Activated CD8-positive, alpha-beta T cell treated with anti-CD3 and anti-CD28 coated beads, Interleukin-2, amount 10 ng/mL, durations not matched to agents 7 days and 5 days (primary cell): ENCODE measurements at regions of chr16 and their contacts with region 1.

Region 1: DNA sequence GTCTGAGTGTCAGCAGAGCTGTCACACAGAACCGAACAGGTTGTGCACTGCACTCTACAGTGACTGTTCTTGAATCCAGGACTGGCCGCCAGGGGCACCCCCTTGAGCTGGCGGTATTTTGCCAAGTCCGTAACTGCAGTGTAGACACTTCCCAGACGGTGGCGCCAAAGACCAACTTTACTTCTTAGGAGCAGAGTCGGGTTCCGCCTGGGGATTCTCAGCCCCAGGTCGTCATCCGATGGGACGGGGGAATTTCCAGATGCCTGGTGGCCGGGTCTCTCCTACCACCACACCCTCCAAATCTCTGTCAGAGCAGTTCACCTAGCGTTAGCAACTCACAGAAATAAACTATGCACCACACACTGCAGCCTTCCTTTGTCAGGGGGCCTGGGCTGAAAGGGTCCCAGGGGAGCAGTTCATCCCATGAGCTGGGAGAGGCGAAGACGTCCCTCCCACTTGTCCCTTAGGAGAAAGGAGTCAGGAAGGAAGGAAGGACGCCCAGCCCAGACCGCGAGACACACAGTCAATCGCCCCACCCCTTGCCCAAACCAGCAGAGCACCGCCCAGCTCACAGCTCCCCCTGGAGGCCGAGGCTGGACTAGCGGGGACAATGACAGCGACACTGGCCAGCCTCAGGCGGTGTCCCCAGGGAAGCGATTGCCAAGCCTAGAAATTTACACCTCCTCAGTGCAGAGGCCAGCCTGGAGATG is 7.4 kb upstream of the RIPOR1 start:
- DNase-seq: peak; percentile 98
- ATAC-seq: peak; percentile 92
- H3K4me3 Mint-ChIP-seq: peak overlapping the region; percentile 84
- H3K27ac Mint-ChIP-seq: peak overlapping the region; percentile 94
- H3K4me1 Mint-ChIP-seq: peaks cover 47% of the 10 kb centered on the region
- H3K27me3 Mint-ChIP-seq: peaks cover 8% of the 10 kb centered on the region

Region 2: GRCh38 chr16:67159593-67160406 is 361.4 kb before region 1 on chr16 and contains the starts of genes FBXL8 and TRADD:
- CTCF ChIA-PET with region 1: no interaction called
- POLR2A ChIA-PET with region 1: no interaction called
- DNase-seq: peak; percentile 86
- ATAC-seq: peak; percentile 73
- H3K4me3 Mint-ChIP-seq: peak within 1 kb of the TSS; percentile 96
- H3K27ac Mint-ChIP-seq: peak within 1 kb of the TSS; percentile 94
- H3K4me1 Mint-ChIP-seq: peaks cover 73% of the 10 kb centered on the region
- H3K27me3 Mint-ChIP-seq: peaks cover 15% of the 10 kb centered on the region
- total RNA-seq, gene FBXL8: 22.7 to 24.8 TPM
- total RNA-seq, gene TRADD: 39.2 to 40.7 TPM

Region 3: DNA sequence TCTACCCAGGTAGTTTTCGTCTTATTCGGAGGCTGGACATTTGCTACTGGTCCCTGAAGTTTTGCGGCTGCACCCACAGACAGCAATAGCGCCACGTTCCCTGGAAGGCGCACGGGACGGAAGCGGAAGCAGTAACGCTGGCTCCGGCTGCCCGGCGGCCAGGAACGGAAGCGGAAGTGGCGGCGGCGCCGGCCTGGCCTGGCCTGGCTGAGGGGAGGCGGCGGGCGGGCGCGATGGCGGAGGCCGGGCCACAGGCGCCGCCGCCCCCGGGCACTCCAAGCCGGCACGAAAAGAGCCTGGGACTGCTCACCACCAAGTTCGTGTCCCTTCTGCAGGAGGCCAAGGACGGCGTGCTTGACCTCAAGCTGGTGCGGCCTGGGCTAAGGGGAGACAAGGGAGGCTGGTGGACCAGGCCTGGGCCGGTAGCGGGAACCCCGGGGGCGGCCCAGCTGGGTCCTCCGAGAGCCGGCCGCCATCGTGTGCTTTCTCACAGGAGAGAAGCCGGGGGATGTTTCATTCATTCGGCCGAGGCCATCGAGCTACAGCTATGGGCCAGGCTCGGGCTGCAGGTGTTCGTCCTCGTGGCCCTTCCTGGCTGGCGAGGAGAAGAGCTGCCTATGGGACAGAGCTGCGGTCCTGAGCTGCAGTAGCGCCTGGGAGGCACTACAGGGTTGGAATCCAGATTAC is 329.1 kb before region 1 on chr16 and contains the start of gene E2F4:
- CTCF ChIA-PET with region 1: no interaction called
- POLR2A ChIA-PET with region 1: no interaction called
- DNase-seq: peak; percentile 90
- ATAC-seq: peak; percentile 95
- H3K4me3 Mint-ChIP-seq: peak within 1 kb of the TSS; percentile 91
- H3K27ac Mint-ChIP-seq: peak within 1 kb of the TSS; percentile 86
- H3K4me1 Mint-ChIP-seq: peaks cover 37% of the 10 kb centered on the region
- H3K27me3 Mint-ChIP-seq: no peaks in the 10 kb centered on the region
- total RNA-seq, gene E2F4: 134 to 138 TPM

Region 4: GRCh38 chr16:67428146-67428731 is 93.0 kb before region 1 on chr16:
- CTCF ChIA-PET with region 1: interaction called, 25 read pairs
- POLR2A ChIA-PET with region 1: no interaction called
- DNase-seq: peak; percentile 71
- ATAC-seq: peak; percentile 67
- H3K4me3 Mint-ChIP-seq: no peak overlapping the region
- H3K27ac Mint-ChIP-seq: no peak overlapping the region
- H3K4me1 Mint-ChIP-seq: peaks cover 7% of the 10 kb centered on the region
- H3K27me3 Mint-ChIP-seq: peaks cover 45% of the 10 kb centered on the region

Region 5: DNA sequence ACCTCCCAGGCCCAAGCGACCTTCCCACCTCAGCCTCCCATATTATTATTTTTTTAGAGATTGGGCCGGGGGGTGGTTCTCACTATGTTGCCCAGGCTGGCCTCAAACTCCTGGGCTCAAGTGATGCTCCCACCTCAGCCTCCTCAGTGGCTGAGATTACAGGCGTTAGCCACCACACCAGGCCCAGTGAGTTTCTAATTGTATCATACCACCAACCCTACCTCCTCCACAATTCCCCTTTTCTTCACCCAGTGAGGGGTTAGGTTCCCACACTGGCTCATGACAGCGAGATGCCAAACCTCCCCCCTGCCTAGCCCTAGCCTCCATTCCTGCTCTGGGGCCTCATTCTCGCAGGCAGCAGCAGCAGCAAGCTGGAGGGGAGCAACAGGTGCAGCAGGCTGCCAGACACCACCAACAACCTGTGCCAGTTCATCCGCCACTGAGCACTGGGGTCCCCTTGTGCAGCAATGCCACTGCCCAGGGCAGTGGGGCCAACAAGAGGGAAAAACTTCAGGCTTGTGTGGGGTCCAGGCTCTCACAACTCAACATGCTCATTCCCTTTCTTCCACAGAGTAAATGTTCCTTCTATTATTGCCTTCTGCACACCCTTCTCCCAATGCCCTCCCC is 49.4 kb before region 1 on chr16:
- CTCF ChIA-PET with region 1: no interaction called
- POLR2A ChIA-PET with region 1: no interaction called
- DNase-seq: no peak
- ATAC-seq: no peak
- H3K4me3 Mint-ChIP-seq: no peak overlapping the region
- H3K27ac Mint-ChIP-seq: no peak overlapping the region
- H3K4me1 Mint-ChIP-seq: peaks cover 2% of the 10 kb centered on the region
- H3K27me3 Mint-ChIP-seq: no peaks in the 10 kb centered on the region

Region 6: GRCh38 chr16:67499106-67499505 is 22.1 kb before region 1 on chr16:
- CTCF ChIA-PET with region 1: interaction called, 277 read pairs
- POLR2A ChIA-PET with region 1: interaction called, 3 read pairs
- DNase-seq: no peak
- ATAC-seq: no peak
- H3K4me3 Mint-ChIP-seq: no peak overlapping the region
- H3K27ac Mint-ChIP-seq: peak overlapping the region; percentile 34
- H3K4me1 Mint-ChIP-seq: peaks cover 13% of the 10 kb centered on the region
- H3K27me3 Mint-ChIP-seq: no peaks in the 10 kb centered on the region

Region 7: DNA sequence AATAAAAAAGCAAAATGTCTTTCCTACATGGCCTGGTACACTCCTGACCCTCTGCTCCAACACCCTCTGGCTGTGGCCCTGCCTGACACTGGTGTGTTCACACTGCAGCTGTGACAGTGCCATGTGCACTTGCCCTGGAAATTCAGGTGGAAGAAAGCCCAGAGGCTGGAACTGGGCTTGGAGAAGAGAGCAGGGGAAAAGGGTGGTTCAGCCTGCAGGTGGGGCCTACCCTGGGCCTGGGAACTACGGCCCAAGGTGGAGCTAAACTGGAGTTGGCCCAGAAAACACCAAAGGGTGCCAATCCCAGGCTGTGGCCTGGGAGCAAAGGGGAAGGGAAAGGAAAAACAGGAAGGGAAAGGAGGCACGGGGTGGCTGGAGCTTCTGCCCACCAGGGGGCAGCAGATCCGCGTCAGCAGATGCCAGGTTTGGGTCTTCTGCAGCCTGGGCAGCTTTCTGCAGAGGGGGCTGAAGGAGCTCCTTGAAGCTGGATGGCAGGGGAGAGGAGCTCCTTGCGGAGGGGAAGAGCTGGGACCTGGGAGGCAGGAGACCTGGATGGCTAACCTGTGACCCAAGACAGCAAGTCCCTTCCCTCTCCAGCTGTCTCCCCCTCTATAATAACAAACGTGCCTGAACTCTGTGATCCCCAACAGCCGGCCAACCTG is 25.6 kb after region 1 on chr16:
- CTCF ChIA-PET with region 1: interaction called, 59 read pairs
- POLR2A ChIA-PET with region 1: no interaction called
- DNase-seq: peak; percentile 83
- ATAC-seq: peak; percentile 52
- H3K4me3 Mint-ChIP-seq: peak overlapping the region; percentile 64
- H3K27ac Mint-ChIP-seq: peak overlapping the region; percentile 99
- H3K4me1 Mint-ChIP-seq: peaks cover 55% of the 10 kb centered on the region
- H3K27me3 Mint-ChIP-seq: no peaks in the 10 kb centered on the region

Region 8: GRCh38 chr16:67632415-67633172 is 111.3 kb after region 1 on chr16:
- CTCF ChIA-PET with region 1: interaction called, 15 read pairs
- POLR2A ChIA-PET with region 1: interaction called, 3 read pairs
- DNase-seq: no peak
- ATAC-seq: no peak
- H3K4me3 Mint-ChIP-seq: no peak overlapping the region
- H3K27ac Mint-ChIP-seq: no peak overlapping the region
- H3K4me1 Mint-ChIP-seq: no peaks in the 10 kb centered on the region
- H3K27me3 Mint-ChIP-seq: no peaks in the 10 kb centered on the region

Region 9: GRCh38 chr16:67667817-67668494 is 146.7 kb after region 1 on chr16:
- CTCF ChIA-PET with region 1: interaction called, 211 read pairs
- POLR2A ChIA-PET with region 1: interaction called, 5 read pairs
- DNase-seq: peak; percentile 90
- ATAC-seq: peak; percentile 85
- H3K4me3 Mint-ChIP-seq: peak overlapping the region; percentile 83
- H3K27ac Mint-ChIP-seq: peak overlapping the region; percentile 55
- H3K4me1 Mint-ChIP-seq: peaks cover 31% of the 10 kb centered on the region
- H3K27me3 Mint-ChIP-seq: no peaks in the 10 kb centered on the region

Region 10: DNA sequence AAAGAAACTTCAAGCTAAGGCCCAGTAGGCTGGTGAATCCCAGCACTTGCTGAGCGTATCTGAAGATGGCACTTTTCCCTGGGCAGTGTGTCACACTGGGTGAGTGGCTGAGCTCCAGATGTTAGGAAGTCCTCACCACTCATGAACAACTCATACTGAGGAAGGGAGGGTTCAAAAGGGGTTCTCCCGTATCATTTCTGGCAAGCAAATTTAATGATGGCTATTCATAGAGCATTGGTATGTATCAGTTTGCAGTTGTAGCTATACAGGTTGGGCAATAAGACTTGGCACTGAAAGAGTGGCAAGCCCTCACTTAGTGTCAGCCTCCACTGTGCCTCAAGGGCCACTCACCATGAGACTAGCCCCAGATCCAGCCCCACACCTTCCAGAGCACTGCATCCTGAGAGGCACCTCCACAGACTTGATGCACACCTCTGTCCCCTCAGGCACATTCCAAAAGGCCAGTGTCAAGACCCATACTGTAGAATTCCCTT is 187.2 kb after region 1 on chr16:
- CTCF ChIA-PET with region 1: no interaction called
- POLR2A ChIA-PET with region 1: no interaction called
- DNase-seq: no peak
- ATAC-seq: no peak
- H3K4me3 Mint-ChIP-seq: no peak overlapping the region
- H3K27ac Mint-ChIP-seq: no peak overlapping the region
- H3K4me1 Mint-ChIP-seq: peaks cover 16% of the 10 kb centered on the region
- H3K27me3 Mint-ChIP-seq: no peaks in the 10 kb centered on the region